A549 (cell line): ENCODE measurements at regions of chr19 and their contacts with region 1.

Region 1: GRCh38 chr19:33778089-33778791 is 18.4 kb upstream of the KCTD15 start:
- DNase-seq: peak; percentile 85 to 96
- ATAC-seq: peak; percentile 61 to 85
- H3K4me3 ChIP-seq: peak overlapping the region; percentile 42
- H3K27ac ChIP-seq: peak overlapping the region in 1 of 2 experiments; percentile 42; a peak in 2 of 6 replicates
- H3K4me1 ChIP-seq: peaks cover 27% of the 10 kb centered on the region
- CTCF ChIP-seq: peak; percentile 100
- EP300 ChIP-seq: no peak
- POLR2A ChIP-seq: no peak
- RAD21 ChIP-seq: peak; percentile 100

Region 2: GRCh38 chr19:33406521-33407139 is 371.6 kb before region 1 on chr19:
- CTCF ChIA-PET with region 1: interaction called, 455 read pairs
- POLR2A ChIA-PET with region 1: no interaction called
- DNase-seq: peak; percentile 76 to 95
- ATAC-seq: peak; percentile 54 to 89
- H3K4me3 ChIP-seq: no peak overlapping the region
- H3K27ac ChIP-seq: no peak overlapping the region
- H3K4me1 ChIP-seq: peaks cover 8% of the 10 kb centered on the region; the same call in 1 of the 3 replicates
- CTCF ChIP-seq: peak; percentile 99
- EP300 ChIP-seq: no peak
- POLR2A ChIP-seq: no peak
- RAD21 ChIP-seq: peak; percentile 100

Region 3: GRCh38 chr19:33752018-33752800 is 26.0 kb before region 1 on chr19:
- CTCF ChIA-PET with region 1: interaction called, 122 read pairs
- POLR2A ChIA-PET with region 1: no interaction called
- DNase-seq: no peak
- ATAC-seq: peak; percentile 36 to 73; a peak in 4 of 6 replicates
- H3K4me3 ChIP-seq: no peak overlapping the region
- H3K27ac ChIP-seq: no peak overlapping the region
- H3K4me1 ChIP-seq: no peaks in the 10 kb centered on the region
- CTCF ChIP-seq: peak; percentile 8; the same call in 1 of the 3 replicates
- EP300 ChIP-seq: no peak
- POLR2A ChIP-seq: no peak
- RAD21 ChIP-seq: peak in 1 of 2 experiments; percentile 27; a peak in 2 of 5 replicates

Region 4: DNA sequence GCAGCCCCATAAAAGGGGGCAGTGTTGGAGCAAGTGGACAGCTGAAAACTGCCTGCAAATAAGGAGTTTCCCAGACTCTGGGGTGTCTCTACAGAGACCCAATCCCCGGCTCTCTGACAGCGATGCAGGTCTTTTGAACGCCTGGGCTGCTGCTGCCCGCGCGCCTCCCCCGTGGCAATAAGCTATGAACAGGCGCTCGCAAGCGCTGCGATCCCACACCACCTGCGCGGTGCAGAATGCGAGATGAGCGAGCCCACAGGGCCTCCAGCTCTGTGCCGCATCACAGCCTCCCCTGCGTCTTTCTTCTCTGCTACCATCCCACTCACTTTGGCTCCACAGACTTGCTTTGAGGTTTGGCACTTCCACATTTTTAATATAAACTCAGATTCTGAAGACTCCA is 80.8 kb after region 1 on chr19:
- CTCF ChIA-PET with region 1: interaction called, 10 read pairs
- POLR2A ChIA-PET with region 1: no interaction called
- DNase-seq: no peak
- ATAC-seq: peak in 1 of 2 experiments; percentile 31; a peak in 1 of 6 replicates
- H3K4me3 ChIP-seq: no peak overlapping the region
- H3K27ac ChIP-seq: no peak overlapping the region
- H3K4me1 ChIP-seq: no peaks in the 10 kb centered on the region
- CTCF ChIP-seq: no peak
- EP300 ChIP-seq: no peak
- POLR2A ChIP-seq: no peak
- RAD21 ChIP-seq: no peak

Region 5: DNA sequence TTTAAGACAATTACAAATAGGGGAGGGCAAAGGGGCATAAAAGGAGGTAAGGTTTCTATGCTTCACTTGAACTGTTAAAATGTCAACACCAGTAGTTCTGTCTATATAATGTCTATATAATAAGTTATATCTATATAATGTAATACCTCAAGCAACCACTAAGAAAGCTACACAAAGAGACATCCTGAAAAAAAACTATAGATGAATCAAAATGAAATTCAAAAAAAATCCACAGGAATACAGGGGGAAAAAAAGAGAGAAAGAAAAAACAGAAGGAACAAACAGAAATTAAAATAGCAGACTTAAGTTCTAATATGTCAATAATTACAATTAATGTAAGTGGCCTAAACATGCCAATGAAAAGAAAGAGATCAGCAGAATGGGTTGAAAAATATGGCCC is 204.5 kb after region 1 on chr19:
- CTCF ChIA-PET with region 1: interaction called, 88 read pairs
- POLR2A ChIA-PET with region 1: no interaction called
- DNase-seq: no peak
- ATAC-seq: no peak
- H3K4me3 ChIP-seq: no peak overlapping the region
- H3K27ac ChIP-seq: no peak overlapping the region
- H3K4me1 ChIP-seq: no peaks in the 10 kb centered on the region
- CTCF ChIP-seq: no peak
- EP300 ChIP-seq: no peak
- POLR2A ChIP-seq: no peak
- RAD21 ChIP-seq: no peak

Region 6: GRCh38 chr19:34082289-34083077 is 304.2 kb after region 1 on chr19:
- CTCF ChIA-PET with region 1: interaction called, 510 read pairs
- POLR2A ChIA-PET with region 1: no interaction called
- DNase-seq: no peak
- ATAC-seq: no peak
- H3K4me3 ChIP-seq: no peak overlapping the region
- H3K27ac ChIP-seq: no peak overlapping the region
- H3K4me1 ChIP-seq: no peaks in the 10 kb centered on the region
- CTCF ChIP-seq: no peak
- EP300 ChIP-seq: no peak
- POLR2A ChIP-seq: no peak
- RAD21 ChIP-seq: no peak

Region 7: GRCh38 chr19:34171877-34172660 is 393.8 kb after region 1 on chr19 and contains the start of gene LSM14A:
- CTCF ChIA-PET with region 1: interaction called, 14 read pairs
- POLR2A ChIA-PET with region 1: no interaction called
- DNase-seq: peak; percentile 97 to 98
- ATAC-seq: peak; percentile 86 to 87
- H3K4me3 ChIP-seq: peak within 1 kb of the TSS; percentile 67
- H3K27ac ChIP-seq: peak within 1 kb of the TSS; percentile 94 to 95
- H3K4me1 ChIP-seq: peaks cover 38% of the 10 kb centered on the region
- CTCF ChIP-seq: no peak
- EP300 ChIP-seq: no peak
- POLR2A ChIP-seq: peak; percentile 98
- RAD21 ChIP-seq: no peak
- polyA plus RNA-seq, gene LSM14A: 264 and 278 TPM in 2 replicates